Cardiac septum (tissue), 1 donor: ENCODE measurements at regions of chr7 and their contacts with region 1.

Region 1: DNA sequence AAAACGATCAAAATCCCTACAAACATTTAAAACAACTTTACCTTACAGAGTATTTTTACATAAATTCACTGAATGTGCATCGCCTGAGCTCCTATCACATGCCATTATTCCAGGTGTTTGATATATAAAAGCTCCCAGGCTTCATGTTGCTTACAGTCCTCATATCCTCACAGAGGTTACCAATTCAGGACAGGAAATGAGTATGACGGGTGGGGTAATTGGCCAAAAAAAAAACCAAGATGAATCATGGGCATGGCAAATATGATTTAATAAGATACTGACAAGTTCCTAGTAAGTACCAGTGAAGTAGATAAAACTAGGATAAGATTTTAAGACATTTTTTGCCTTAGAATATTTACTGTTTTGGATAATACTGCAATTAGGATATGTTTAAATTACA is 135.8 kb downstream of the KMT2E start:
- DNase-seq: no peak

Region 2: GRCh38 chr7:105336009-105336408 is 186.2 kb after region 1 on chr7:
- intact Hi-C with region 1: loop called (anchors 5 kb)
- DNase-seq: no peak

Region 3: DNA sequence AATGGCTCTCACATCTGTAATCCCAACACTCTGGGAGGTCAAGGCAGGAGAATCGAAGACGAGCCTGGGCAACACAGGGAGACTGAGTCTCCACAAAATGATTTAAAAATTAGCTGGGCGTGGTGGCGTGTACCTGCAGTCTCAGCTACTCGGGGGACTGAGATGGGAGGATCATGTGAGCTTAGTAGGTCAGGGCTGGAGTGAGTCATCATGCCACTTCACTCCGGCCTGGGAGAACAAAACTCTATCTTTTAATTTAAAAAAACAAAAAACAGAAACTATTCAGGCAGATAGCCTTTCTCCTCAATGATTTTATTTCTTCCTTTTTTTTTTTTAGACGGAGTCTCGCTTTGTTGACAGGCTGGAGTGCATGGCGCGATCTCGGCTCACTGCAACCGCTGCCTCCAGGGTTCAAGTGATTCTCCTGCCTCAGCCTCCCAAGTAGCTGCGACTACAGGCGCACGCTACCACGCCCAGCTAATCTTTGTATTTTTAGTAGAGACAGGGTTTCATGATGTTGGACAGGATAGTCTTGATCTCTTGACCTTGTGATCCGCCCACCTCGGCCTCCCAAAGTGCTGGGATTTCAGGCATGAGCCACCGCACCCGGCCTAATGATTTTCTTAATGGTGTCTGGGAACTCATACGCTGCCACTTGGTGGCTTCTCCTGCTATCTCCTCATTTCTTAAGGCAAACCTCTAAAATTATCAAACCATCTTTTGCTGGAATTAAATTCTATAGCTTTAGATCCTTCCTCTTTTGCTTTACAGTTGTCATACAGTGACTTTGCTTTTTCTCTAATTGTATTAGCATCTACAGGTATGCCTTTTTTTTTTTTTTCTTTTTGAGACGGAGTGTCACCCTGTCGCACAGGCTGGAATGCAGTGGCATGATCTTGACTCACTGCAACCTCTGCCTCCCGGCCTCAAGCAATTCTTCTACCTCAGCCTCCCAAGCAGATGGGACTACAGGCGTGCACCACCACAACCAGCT is 216.0 kb after region 1 on chr7:
- intact Hi-C with region 1: no loop called
- DNase-seq: no peak

Region 4: GRCh38 chr7:105429746-105430612 is 280.2 kb after region 1 on chr7:
- intact Hi-C with region 1: loop called (anchors 2 kb)
- DNase-seq: no peak

Region 5: DNA sequence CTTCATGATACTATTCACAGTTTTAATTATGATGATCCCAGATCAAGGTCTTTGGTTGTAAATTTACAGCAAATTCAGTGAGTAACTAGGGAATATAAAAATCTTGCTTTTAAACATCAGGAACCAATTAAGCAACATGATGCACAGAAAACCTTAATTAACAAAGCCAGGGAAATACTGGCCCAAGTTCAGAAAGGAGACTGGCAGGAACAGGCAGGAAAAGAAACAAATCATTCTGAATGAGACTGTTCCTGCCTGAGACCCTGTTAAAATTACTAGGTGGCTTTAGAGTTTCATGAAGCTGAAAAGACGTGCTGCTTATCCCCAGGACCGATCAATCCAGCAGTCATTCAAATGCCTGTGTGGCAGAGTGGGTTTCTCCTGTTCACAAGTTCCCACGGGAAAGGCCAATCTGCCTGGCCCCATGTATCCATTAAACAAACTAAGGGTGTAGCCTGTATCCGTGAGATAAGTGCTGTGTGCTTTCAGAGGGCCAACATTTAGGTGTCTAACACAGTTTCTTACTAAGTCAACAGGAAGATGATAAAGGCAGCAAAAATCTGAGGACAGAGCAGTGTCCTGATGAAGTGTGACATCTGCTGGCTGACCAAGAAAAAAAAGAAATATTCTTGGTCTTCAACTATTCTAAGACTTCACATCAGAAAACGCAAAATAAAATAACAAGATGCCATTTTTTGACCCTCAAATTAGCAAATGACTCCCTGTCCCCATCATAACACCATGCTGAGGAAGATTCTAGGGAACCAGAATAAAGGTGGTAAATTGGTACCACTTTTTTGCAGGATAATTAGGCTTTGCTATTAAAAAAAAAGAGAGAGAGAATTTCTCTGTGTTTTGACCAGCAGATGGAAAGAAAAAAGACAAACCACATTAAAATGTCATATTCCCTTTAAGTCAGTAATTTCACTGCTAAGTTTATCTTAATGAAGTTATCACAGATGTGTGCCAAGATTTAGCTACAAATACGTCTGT is 338.0 kb after region 1 on chr7:
- intact Hi-C with region 1: loop called (anchors 2 kb)
- DNase-seq: no peak